HEK293 (cell line): ENCODE measurements at regions of chr1 and their contacts with region 1.

Region 1: DNA sequence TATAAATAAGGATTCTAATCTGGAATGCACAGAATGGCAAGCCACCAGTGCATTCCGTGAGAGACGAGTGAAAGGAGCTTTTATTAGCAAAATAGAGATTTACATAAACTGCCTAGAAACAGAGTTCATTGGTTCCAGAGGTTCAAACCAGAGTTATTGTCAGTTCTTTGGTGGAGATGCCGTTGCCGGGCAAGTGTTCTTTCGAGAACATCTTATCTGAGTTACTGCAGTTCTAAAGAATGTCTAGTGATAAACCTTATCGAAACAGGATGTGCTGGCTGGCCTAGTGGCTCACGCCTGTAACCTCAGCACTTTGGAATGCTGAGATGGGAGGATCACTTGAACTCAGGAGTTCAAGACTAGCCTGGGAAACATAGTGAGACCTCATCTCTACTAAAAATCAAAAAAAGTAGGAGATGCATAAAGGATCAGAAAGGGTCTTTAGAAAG is 19.8 kb upstream of the EVI5 start:
- H3K4me3 ChIP-seq: no peak overlapping the region
- H3K27ac ChIP-seq: no peak overlapping the region
- H3K4me1 ChIP-seq: no peaks in the 10 kb centered on the region
- CTCF ChIP-seq: no peak

Region 2: GRCh38 chr1:92333668-92334067 is 471.1 kb before region 1 on chr1:
- CTCF ChIA-PET with region 1: no interaction called
- POLR2A ChIA-PET with region 1: no interaction called
- H3K4me3 ChIP-seq: no peak overlapping the region
- H3K27ac ChIP-seq: no peak overlapping the region
- H3K4me1 ChIP-seq: no peaks in the 10 kb centered on the region
- CTCF ChIP-seq: no peak

Region 3: DNA sequence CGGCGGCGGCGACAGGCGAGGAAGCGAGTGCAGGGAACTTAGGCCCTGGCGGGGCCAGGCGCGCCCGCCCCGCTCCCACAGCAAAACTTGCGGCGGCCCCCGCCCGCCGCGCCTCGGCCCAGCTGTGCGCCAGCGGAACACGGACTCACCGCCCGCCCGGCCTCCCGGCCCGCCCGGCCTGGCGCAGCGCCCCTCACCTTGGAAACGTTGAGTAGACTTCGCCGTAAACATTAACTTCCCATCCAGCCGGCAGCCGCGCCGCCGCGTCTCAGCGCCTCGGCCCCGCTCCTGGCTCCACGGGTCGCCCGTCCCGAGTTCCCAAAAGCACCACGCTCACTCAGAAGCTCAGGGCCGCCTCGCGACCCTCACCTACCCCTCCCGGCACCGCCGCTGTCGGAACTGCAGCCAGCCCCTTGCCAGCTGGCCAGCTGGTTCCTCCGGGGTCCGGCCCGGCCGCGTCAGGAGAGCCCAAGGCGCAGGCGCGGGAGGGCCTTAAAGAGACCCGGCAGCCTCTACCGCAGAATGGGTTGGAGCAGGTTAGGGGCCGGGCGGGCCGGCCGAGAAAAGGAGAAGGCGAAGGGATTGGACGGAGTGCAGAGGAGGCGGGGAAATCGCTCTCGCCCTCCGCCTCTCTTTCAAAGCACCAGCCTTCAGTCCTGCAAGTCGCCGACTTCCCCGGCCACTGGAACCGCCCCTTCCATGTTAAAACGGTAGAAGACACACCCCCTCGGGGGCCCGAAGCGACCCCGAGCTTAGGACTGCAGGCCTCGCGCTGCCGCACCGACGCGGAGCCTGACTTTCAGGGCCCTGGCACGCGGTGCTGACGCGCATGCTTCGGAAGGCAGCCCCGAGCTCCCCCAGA is 19.9 kb before region 1 on chr1 and contains the start of gene EVI5:
- CTCF ChIA-PET with region 1: interaction called, 3 read pairs
- POLR2A ChIA-PET with region 1: interaction called, 16 read pairs
- H3K4me3 ChIP-seq: peak within 1 kb of the TSS; percentile 59
- H3K27ac ChIP-seq: peak within 1 kb of the TSS; percentile 90
- H3K4me1 ChIP-seq: no peaks in the 10 kb centered on the region
- CTCF ChIP-seq: peak; percentile 42; the same call in 1 of the 2 replicates

Region 4: DNA sequence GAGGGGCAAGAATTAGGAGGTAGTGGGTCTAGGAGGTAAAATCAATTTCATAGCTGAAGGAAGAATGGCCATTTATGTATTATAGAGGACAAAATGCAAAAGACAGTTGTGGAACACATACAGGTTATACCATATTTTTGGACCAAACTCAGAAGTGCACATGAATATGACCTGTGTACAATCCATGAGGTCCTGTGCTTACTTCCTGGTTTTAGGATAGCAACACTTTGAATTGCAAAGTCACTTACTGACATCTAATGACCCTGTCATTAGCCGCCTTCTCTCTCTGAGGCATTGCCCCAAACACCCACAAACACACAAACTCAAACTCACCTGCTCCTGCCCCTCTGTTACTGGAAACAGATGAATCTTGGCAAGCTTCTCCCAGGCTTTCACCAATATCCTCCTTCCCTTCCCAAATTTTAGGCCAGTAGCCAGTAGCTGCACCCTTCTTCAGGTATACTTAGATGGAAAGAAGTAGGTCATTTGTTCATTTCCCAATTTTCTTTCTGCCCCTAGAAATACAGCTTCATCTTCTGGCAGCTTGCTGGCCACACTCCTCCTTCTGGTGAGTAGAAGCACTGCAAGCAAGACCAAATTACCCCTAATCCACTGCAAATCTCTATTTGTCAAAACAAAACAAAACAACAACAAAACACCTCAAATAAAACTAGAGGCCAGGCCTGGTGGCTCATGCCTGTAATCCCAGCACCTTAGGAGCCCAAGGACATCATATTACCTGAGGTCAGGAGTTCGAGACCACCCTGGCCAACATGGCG is 13.4 kb after region 1 on chr1:
- CTCF ChIA-PET with region 1: interaction called, 11 read pairs
- POLR2A ChIA-PET with region 1: no interaction called
- H3K4me3 ChIP-seq: no peak overlapping the region
- H3K27ac ChIP-seq: no peak overlapping the region
- H3K4me1 ChIP-seq: no peaks in the 10 kb centered on the region
- CTCF ChIP-seq: peak; percentile 27; the same call in 1 of the 2 replicates